IMR-90 (cell line): ENCODE measurements at regions of chr21 and their contacts with region 1.

Region 1: DNA sequence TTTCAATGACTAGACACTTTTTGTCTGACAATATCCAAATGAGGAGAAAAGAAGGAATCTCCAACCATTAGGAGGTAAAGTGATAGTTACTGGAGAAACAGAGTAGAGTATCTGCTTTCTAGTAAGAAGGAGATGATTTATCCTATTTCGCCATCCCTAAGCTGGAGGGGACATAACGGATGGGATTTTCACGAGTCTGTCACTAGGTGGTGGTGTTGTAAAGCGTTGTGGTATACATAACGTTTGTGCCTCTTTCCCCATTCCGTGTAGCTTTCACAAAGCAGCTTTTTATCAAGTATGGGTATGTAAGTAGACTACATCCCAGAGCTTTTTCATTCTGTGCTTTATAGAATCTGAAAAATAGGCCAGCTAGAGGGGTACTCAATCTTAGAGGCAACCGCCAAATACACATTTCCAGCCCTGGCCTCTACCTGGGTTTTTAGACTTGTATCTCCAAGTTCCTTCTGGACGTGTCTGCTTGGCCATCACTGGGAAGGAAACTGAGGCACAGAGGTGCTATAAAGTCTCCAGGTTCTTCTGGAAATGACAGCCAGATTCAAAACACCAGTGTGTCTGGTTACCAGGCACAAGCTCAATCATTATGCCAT is 33.3 kb upstream of the FAM3B start:
- DNase-seq: peak; percentile 87
- ATAC-seq: peak; percentile 97
- H3K4me3 ChIP-seq: no peak overlapping the region
- H3K27ac ChIP-seq: no peak overlapping the region
- H3K4me1 ChIP-seq: peaks cover 2% of the 10 kb centered on the region; the same call in 1 of the 2 replicates
- H3K27me3 ChIP-seq: no peaks in the 10 kb centered on the region; the same call in 1 of the 2 replicates
- CTCF ChIP-seq: peak; percentile 93
- POLR2A ChIP-seq: 0 out of 2 replicates have a peak, but pooled peaks have one; percentile 33
- RAD21 ChIP-seq: peak; percentile 94

Region 2: DNA sequence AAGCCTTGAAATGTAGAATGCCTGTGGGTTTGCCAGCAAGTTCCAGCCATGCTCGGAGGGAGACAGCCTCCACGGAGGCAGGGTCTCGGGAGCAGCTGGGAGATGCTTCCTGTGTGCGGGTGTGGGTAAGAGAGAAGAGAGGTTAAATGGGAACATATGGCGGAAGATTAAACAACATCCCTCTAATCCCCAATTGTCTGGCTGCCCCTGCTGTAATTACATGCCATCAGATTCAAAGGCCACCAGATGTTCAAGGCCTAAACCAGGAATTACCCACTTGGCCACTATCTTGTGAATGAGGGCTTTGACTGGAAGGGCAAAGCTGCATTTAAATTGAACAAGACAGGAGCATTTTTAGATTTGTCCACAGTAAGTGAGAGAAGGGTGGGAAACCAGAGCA is 196.7 kb before region 1 on chr21:
- CTCF ChIA-PET with region 1: no interaction called
- POLR2A ChIA-PET with region 1: no interaction called
- dilution Hi-C with region 1: no loop called
- in situ Hi-C with region 1: no loop called
- intact Hi-C with region 1: no loop called
- DNase-seq: no peak
- ATAC-seq: no peak
- H3K4me3 ChIP-seq: no peak overlapping the region
- H3K27ac ChIP-seq: no peak overlapping the region
- H3K4me1 ChIP-seq: no peaks in the 10 kb centered on the region
- H3K27me3 ChIP-seq: no peaks in the 10 kb centered on the region
- CTCF ChIP-seq: no peak
- POLR2A ChIP-seq: no peak
- RAD21 ChIP-seq: no peak

Region 3: GRCh38 chr21:41167348-41168342 is 115.7 kb before region 1 on chr21 and contains the start of gene BACE2:
- CTCF ChIA-PET with region 1: interaction called, 14 read pairs
- POLR2A ChIA-PET with region 1: no interaction called
- dilution Hi-C with region 1: no loop called
- in situ Hi-C with region 1: no loop called
- intact Hi-C with region 1: no loop called
- DNase-seq: peak; percentile 68
- ATAC-seq: peak; percentile 92
- H3K4me3 ChIP-seq: peak within 1 kb of the TSS; percentile 58
- H3K27ac ChIP-seq: peak within 1 kb of the TSS; percentile 49
- H3K4me1 ChIP-seq: no peaks in the 10 kb centered on the region; the same call in 1 of the 2 replicates
- H3K27me3 ChIP-seq: peaks cover 3% of the 10 kb centered on the region
- CTCF ChIP-seq: peak; percentile 48
- POLR2A ChIP-seq: 0 out of 2 replicates have a peak, but pooled peaks have one; percentile 30
- RAD21 ChIP-seq: no peak
- total RNA-seq, gene BACE2: 17.0 and 18.1 TPM in 2 replicates

Region 4: DNA sequence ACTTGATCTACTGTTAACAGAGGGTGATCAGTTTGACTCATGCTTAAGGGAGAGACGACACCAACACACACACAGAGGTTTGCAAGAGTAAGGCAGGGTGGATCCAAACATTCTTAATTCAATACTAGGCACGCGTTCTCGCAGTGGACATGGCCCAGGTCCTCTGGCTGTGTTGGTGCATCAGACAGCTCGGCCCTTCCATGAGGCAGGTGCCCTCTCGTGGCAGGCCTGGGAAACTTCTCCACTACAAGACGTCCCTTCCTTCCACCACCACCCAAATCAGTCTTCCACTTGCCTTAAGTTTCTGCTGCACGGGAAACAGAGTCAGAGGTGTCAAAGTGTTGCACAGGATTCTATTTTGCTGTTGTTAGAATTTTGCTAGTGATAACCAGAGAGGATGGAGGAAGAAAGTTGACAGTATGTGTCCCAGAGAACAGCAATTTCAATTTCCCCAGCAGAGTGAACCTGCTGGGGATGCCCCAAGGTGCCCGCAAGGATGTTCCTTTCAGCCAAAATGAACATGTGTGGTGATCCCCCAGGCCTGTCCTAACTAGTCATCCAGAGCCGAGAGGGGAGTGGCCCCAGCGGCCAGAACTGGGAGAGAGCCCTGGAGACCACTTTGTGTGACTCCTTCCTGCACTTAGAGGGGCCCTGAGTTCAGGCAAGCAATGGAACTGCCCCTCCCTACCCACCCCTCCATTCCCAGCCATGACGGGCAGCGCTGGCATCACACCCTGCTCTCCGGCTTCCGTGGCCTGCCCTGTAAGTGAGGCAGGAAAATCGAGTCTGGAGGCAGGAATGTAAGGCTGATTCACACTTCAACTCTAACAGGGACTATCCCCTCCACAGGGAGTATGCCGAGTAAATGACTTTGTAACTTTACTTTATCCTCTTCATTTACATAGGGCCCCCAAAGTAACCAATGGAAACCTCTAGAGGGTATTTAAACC is 177.5 kb after region 1 on chr21:
- CTCF ChIA-PET with region 1: interaction called, 15 read pairs
- POLR2A ChIA-PET with region 1: interaction called, 3 read pairs
- dilution Hi-C with region 1: no loop called
- in situ Hi-C with region 1: loop called (anchors 5 kb)
- intact Hi-C with region 1: loop called (anchors 1 kb)
- DNase-seq: peak; percentile 72
- ATAC-seq: peak; percentile 97
- H3K4me3 ChIP-seq: no peak overlapping the region
- H3K27ac ChIP-seq: no peak overlapping the region
- H3K4me1 ChIP-seq: no peaks in the 10 kb centered on the region
- H3K27me3 ChIP-seq: no peaks in the 10 kb centered on the region
- CTCF ChIP-seq: peak; percentile 73
- POLR2A ChIP-seq: no peak
- RAD21 ChIP-seq: peak; percentile 78

Region 5: DNA sequence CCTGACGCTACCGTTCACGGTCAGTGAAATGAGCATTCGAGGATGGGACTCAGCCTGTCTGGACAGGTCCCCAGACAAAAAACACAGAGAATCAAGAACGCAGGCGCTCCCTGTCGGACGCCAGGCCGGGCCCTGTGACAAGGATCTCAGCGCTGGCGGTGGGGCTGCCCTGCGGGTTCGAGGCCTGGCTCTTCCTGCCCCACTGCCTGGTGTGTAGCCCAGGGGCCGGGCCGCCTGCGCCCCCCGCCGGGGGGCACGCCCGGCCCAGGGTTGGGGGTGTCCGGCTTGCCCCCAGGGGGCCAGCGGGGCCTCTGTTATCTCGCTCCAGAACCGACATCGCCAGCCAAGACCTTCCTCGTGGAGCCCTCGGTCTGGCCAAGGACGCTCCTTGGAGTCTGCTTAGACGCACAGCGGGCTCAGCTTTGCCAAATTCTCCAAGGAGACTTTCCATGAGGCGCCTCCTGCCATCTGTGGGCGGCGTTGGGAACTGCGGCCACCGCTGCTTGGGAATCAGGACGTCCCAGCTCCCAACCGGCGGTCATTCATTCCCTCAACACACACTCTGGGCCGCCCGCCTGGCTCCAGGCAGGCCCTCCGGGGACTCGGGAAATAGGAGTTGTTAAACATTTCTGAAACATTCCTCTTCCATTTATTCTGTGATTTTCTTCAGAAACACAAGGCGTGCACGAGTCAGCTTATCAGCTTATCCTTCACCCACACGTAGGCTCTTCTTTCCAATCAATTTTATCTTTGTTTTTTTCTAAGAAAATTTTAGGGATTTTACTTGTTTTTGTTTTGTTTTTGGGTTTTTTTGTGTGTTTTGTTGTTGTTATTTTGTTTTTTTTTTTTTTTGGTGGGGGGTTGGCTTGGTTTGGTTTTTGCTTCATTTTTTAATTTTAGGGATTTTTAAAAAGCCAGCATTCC is 494.9 kb after region 1 on chr21:
- CTCF ChIA-PET with region 1: interaction called, 4 read pairs
- POLR2A ChIA-PET with region 1: no interaction called
- dilution Hi-C with region 1: no loop called
- in situ Hi-C with region 1: loop called (anchors 25 kb)
- intact Hi-C with region 1: loop called (anchors 1 kb)
- DNase-seq: peak; percentile 69
- ATAC-seq: peak; percentile 96
- H3K4me3 ChIP-seq: no peak overlapping the region
- H3K27ac ChIP-seq: no peak overlapping the region
- H3K4me1 ChIP-seq: no peaks in the 10 kb centered on the region
- H3K27me3 ChIP-seq: peaks cover 57% of the 10 kb centered on the region
- CTCF ChIP-seq: peak; percentile 73
- POLR2A ChIP-seq: no peak
- RAD21 ChIP-seq: peak; percentile 80

Region 6: GRCh38 chr21:41816220-41817165 is 533.2 kb after region 1 on chr21:
- CTCF ChIA-PET with region 1: no interaction called
- POLR2A ChIA-PET with region 1: no interaction called
- dilution Hi-C with region 1: no loop called
- in situ Hi-C with region 1: no loop called
- intact Hi-C with region 1: loop called (anchors 2 kb)
- DNase-seq: peak; percentile 46
- ATAC-seq: peak; percentile 84
- H3K4me3 ChIP-seq: no peak overlapping the region
- H3K27ac ChIP-seq: no peak overlapping the region
- H3K4me1 ChIP-seq: no peaks in the 10 kb centered on the region
- H3K27me3 ChIP-seq: no peaks in the 10 kb centered on the region
- CTCF ChIP-seq: peak; percentile 75
- POLR2A ChIP-seq: no peak
- RAD21 ChIP-seq: peak; percentile 76